Caco-2 (cell line): ENCODE measurements at regions of chrX and their contacts with region 1.

Region 1: GRCh38 chrX:4466376-4466775 is 752.9 kb upstream of the PRKX start:
- DNase-seq: no peak
- H3K4me3 ChIP-seq: no peak overlapping the region
- H3K4me3 Mint-ChIP-seq: no peak overlapping the region
- H3K27ac Mint-ChIP-seq: no peak overlapping the region
- H3K4me1 ChIP-seq: no peaks in the 10 kb centered on the region
- H3K4me1 Mint-ChIP-seq: no peaks in the 10 kb centered on the region
- H3K27me3 ChIP-seq: no peaks in the 10 kb centered on the region
- H3K27me3 Mint-ChIP-seq: no peaks in the 10 kb centered on the region
- CTCF ChIP-seq: no peak

Region 2: DNA sequence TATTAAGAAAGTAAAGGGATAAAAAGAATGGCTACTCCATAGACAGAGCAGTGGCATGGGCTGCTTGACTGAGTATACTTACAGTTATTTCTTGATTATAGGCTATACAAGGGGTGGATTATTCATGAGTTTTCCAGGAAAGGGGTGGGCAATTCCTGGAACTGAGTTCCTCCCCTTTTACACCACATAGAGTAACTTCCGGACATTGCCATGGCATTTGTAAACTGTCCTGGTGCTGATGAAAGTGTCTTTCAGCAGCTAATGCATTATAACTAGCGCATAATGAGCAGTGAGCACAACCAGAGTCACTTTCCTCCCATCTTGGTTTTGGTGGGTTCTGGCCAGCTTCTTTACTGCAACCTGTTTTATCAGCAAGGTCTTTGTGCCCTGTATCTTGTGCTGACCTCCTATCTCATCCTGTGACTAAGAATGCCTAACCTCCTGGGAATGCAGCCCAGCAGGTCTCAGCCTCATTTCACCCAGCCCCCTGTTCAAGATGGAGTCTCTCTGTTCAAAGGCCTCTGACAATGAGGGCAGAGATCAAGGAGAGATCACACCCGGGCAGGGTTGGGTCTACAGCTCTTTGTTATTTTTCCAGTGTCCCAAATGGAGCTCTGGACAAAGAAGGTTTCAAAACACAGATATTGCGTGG is 284.5 kb before region 1 on chrX:
- CTCF ChIA-PET with region 1: no interaction called
- POLR2A ChIA-PET with region 1: no interaction called
- intact Hi-C with region 1: no loop called
- DNase-seq: peak; percentile 44 to 55
- H3K4me3 ChIP-seq: no peak overlapping the region
- H3K4me3 Mint-ChIP-seq: no peak overlapping the region
- H3K27ac Mint-ChIP-seq: peak overlapping the region; percentile 17
- H3K4me1 ChIP-seq: peaks cover 5% of the 10 kb centered on the region; the same call in 1 of the 2 replicates
- H3K4me1 Mint-ChIP-seq: no peaks in the 10 kb centered on the region
- H3K27me3 ChIP-seq: no peaks in the 10 kb centered on the region
- H3K27me3 Mint-ChIP-seq: no peaks in the 10 kb centered on the region
- CTCF ChIP-seq: no peak

Region 3: DNA sequence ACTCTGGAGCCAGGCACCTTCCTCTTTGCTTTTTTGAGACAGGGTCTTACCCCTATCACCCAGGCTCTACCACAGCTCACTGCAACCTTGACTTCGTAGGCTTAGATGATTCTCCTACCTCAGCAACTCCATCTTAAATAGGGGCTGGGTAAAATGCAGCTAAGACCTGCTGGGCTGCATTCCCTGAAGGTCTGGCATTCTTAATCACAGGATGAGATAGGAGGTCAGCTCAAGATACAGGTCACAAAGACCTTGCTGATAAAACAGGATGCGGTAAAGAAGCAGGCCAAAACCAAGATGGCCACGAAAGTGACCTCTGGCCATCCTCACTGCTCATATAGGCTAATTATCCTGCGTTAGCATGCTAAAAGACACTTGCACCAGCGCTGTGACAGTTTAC is 17.9 kb after region 1 on chrX:
- CTCF ChIA-PET with region 1: no interaction called
- POLR2A ChIA-PET with region 1: no interaction called
- intact Hi-C with region 1: loop called (anchors 1 kb)
- DNase-seq: peak; percentile 26 to 49
- H3K4me3 ChIP-seq: no peak overlapping the region
- H3K4me3 Mint-ChIP-seq: no peak overlapping the region
- H3K27ac Mint-ChIP-seq: peak overlapping the region; percentile 76
- H3K4me1 ChIP-seq: 0 out of 2 replicates have a peak, but pooled peaks cover 5% of the 10 kb centered on the region
- H3K4me1 Mint-ChIP-seq: peaks cover 8% of the 10 kb centered on the region
- H3K27me3 ChIP-seq: no peaks in the 10 kb centered on the region
- H3K27me3 Mint-ChIP-seq: no peaks in the 10 kb centered on the region
- CTCF ChIP-seq: no peak